Spleen (tissue), 13 donors: ENCODE measurements at regions of chr3 and their contacts with region 1.

Region 1: GRCh38 chr3:58299839-58300516 is 6.1 kb upstream of the RPP14 start:
- DNase-seq: no peak
- H3K4me3 ChIP-seq: no peak overlapping the region
- H3K27ac ChIP-seq: peak overlapping the region in 1 of 8 donors; percentile 39
- H3K4me1 ChIP-seq: peaks cover 0 to 36% (median 5%) of the 10 kb centered on the region in 6 donors
- H3K27me3 ChIP-seq: peaks cover 0 to 5% (median 0%) of the 10 kb centered on the region in 7 donors
- CTCF ChIP-seq: peak in 10 of 11 experiments; percentile 30 to 64 (median 44)
- POLR2A ChIP-seq: no peak

Region 2: DNA sequence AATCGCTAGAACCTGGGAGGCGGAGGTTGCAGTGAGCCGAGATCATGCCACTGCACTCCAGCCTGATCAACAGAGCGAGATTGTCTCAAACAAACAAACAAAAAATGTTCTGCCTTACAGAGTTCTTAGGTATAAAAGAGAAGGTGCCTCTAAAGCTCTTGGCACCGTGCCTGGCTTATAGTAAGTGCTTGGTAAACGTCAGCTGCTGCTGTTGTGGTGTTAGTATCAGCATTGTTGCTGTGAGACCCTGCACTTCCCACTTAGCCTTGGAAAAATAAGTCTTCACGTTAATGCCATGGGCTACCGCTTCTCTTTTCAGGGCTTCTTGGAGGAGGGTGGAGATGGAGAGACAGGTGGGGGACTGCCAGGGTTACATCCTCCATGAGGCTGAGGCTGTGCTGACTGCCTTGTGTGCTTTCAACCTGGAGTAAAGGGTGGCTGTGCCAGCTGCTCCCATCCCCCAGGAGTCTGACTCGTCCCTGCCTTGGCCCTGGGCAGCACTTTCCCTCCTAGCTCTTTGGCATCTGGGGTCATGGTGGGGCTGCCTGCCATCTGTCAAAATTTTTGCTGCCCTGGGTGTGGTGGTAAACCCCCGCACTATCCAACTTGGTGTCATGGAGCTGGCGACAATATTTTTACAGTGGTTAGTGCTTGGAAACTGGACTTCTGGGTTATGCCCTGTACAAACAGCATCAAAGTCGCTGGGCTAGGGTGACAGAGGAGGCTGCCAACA is 274.0 kb before region 1 on chr3:
- intact Hi-C with region 1: no loop called
- DNase-seq: peak; percentile 51
- H3K4me3 ChIP-seq: no peak overlapping the region
- H3K27ac ChIP-seq: no peak overlapping the region
- H3K4me1 ChIP-seq: peaks cover 0 to 25% (median 9%) of the 10 kb centered on the region in 6 donors
- H3K27me3 ChIP-seq: no peaks in the 10 kb centered on the region
- CTCF ChIP-seq: no peak
- POLR2A ChIP-seq: no peak

Region 3: DNA sequence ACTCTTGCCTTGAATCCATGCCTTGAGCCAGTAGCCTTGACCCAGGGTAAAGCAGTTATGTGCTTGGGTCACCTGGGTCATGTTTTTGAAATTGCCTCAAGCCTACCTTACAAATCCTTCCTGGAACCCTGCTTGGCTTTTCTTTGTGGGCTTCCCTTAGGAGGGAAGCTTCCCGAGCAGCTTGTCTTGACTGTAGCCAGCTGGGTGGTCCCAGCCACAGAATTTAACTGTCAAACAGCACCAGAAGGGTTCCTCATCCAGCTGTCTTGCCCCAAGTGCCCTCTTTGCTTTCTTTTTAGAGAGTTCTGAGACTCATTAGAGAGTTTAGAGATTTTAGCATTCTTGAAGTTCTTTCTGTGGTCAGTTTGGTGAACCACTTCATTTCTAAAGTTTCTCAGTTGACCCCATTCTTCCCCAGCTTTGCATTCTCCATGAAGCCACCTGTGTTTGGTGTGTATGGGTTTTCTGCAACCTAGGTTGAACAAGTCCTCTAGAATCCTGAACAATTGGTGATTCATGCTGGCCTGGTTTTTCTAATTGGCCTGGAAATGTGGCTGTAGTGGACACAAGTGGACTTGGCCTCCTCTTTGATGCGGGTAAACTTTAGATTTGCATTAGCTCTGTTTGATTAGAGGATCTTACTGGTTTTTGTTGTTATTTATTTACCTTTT is 258.2 kb before region 1 on chr3:
- intact Hi-C with region 1: no loop called
- DNase-seq: no peak
- H3K4me3 ChIP-seq: no peak overlapping the region
- H3K27ac ChIP-seq: peak overlapping the region in 6 of 8 donors; percentile 1 to 66 (median 44)
- H3K4me1 ChIP-seq: peaks cover 7 to 66% (median 40%) of the 10 kb centered on the region in 6 donors
- H3K27me3 ChIP-seq: no peaks in the 10 kb centered on the region
- CTCF ChIP-seq: no peak
- POLR2A ChIP-seq: no peak

Region 4: DNA sequence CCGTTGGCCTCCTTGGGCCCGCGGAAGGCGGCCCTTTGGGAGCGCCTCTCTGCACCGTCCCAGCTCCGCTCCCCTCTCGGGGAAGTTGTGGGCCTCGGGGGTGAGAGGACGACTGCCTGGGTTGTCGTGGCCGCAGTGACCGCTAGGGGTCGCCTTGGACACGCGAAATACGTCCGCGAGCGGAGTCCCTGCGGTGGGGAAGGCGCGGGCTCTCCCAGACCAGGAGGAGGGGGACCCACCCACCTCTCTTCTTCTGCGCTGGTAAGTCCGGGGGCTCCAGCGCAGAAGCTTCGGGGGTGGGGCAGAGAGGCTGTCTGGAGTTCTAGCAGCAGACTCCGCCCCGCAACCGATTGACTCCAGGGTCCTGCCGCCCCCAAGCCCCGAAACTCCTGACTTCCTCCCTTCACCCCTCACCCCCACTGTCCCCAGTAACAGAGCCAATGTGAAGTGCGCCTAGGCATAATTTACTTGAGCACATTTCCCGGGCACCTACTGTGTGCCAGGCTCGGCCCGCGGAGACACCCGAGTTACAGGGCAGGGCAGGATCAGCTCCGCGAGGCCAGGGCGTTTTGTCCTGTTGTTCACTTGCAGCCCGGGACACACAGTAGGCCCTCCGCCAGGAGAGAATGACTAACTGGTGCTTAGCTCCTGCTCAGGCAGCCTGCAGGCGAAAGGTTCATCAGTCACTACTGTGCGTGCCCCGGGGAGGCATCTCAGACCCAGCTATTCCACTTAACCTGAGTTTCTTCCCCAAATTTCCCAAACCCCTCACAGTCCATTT is 122.0 kb before region 1 on chr3:
- intact Hi-C with region 1: no loop called
- DNase-seq: peak; percentile 98
- H3K4me3 ChIP-seq: peak overlapping the region; percentile 27 to 73 (median 38)
- H3K27ac ChIP-seq: peak overlapping the region in 1 of 8 donors; percentile 7
- H3K4me1 ChIP-seq: peaks cover 8 to 59% (median 49%) of the 10 kb centered on the region in 6 donors
- H3K27me3 ChIP-seq: peaks cover 0 to 15% (median 0%) of the 10 kb centered on the region in 7 donors
- CTCF ChIP-seq: peak; percentile 86 to 98 (median 96)
- POLR2A ChIP-seq: no peak

Region 5: GRCh38 chr3:58188173-58188564 is 111.8 kb before region 1 on chr3:
- intact Hi-C with region 1: loop called (anchors 2 kb)
- DNase-seq: peak; percentile 67
- H3K4me3 ChIP-seq: no peak overlapping the region
- H3K27ac ChIP-seq: peak overlapping the region in 7 of 8 donors; percentile 39 to 80 (median 73)
- H3K4me1 ChIP-seq: peaks cover 10 to 37% (median 17%) of the 10 kb centered on the region in 6 donors
- H3K27me3 ChIP-seq: no peaks in the 10 kb centered on the region
- CTCF ChIP-seq: no peak
- POLR2A ChIP-seq: no peak

Region 6: GRCh38 chr3:58249358-58250092 is 50.5 kb before region 1 on chr3:
- intact Hi-C with region 1: loop called (anchors 10 kb)
- DNase-seq: no peak
- H3K4me3 ChIP-seq: no peak overlapping the region
- H3K27ac ChIP-seq: peak overlapping the region in 7 of 8 donors; percentile 2 to 70 (median 51)
- H3K4me1 ChIP-seq: peaks cover 0 to 95% (median 51%) of the 10 kb centered on the region in 6 donors
- H3K27me3 ChIP-seq: no peaks in the 10 kb centered on the region
- CTCF ChIP-seq: no peak
- POLR2A ChIP-seq: no peak

Region 7: GRCh38 chr3:58271901-58272501 is 28.0 kb before region 1 on chr3:
- intact Hi-C with region 1: no loop called
- DNase-seq: no peak
- H3K4me3 ChIP-seq: no peak overlapping the region
- H3K27ac ChIP-seq: peak overlapping the region in 7 of 8 donors; percentile 15 to 69 (median 52)
- H3K4me1 ChIP-seq: peaks cover 0 to 33% (median 16%) of the 10 kb centered on the region in 6 donors
- H3K27me3 ChIP-seq: no peaks in the 10 kb centered on the region
- CTCF ChIP-seq: no peak
- POLR2A ChIP-seq: no peak